HEK293 (cell line): ENCODE measurements at regions of chr5 and their contacts with region 1.

Region 1: GRCh38 chr5:171418316-171418981 is 998 bp upstream of the FGF18 start:
- H3K4me3 ChIP-seq: peak overlapping the region; percentile 49
- H3K27ac ChIP-seq: no peak overlapping the region
- H3K4me1 ChIP-seq: peaks cover 2% of the 10 kb centered on the region; the same call in 1 of the 2 replicates
- CTCF ChIP-seq: peak; percentile 96

Region 2: DNA sequence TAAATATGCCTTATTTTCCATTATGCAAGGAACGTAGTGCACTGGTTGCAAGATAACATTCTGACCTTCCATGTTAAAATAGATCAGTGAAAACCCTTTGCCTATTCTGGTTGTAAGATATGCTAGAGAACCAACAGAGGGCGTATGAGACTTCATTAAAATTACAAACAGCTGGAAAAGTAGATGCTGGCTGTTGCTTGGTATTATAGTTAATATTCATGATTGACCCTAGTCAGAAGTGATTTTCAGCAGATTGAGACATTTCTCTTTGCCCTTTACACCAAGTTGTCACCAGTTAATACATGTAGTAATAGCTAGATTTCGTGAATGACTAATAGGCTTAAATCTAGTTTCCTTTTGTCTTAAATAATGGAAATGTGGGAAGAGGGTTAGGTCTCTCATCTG is 12.8 kb before region 1 on chr5:
- CTCF ChIA-PET with region 1: interaction called, 10 read pairs
- POLR2A ChIA-PET with region 1: no interaction called
- H3K4me3 ChIP-seq: no peak overlapping the region
- H3K27ac ChIP-seq: no peak overlapping the region
- H3K4me1 ChIP-seq: no peaks in the 10 kb centered on the region
- CTCF ChIP-seq: no peak

Region 3: DNA sequence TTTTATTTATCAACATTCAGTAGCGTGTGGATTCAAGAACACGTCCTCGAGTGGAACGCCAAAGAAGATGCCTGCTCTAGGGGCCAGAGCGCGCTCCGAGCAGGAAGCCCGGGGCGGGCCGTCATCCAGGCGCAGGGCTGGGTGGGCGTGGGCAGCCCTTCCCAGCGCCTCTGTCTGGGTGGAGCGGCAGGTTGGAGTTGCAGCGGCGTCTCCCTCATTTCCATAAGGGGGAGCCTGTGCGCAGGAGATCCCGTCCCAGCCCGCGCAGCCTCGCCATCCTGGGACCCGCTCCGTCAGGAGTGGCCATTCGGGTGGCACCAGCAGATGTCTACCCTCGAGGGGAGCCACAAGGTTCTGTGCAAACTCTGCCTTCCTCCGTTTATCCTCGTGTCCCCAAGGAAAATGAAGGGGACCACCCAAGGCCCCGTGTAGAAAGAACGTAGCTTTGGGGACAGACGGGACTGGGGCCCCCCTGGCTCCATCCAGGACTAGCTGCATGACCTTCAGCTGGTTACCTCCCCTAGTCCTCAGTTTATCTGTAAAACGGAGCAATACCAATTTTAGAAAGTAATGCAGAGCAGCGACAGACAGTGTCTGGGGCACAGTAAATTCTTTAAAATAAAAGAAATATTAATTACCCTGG is 211.7 kb after region 1 on chr5:
- CTCF ChIA-PET with region 1: interaction called, 11 read pairs
- POLR2A ChIA-PET with region 1: no interaction called
- H3K4me3 ChIP-seq: no peak overlapping the region
- H3K27ac ChIP-seq: no peak overlapping the region
- H3K4me1 ChIP-seq: no peaks in the 10 kb centered on the region
- CTCF ChIP-seq: peak; percentile 80

Region 4: GRCh38 chr5:171724468-171725204 is 306.2 kb after region 1 on chr5:
- CTCF ChIA-PET with region 1: no interaction called
- POLR2A ChIA-PET with region 1: no interaction called
- H3K4me3 ChIP-seq: no peak overlapping the region
- H3K27ac ChIP-seq: no peak overlapping the region
- H3K4me1 ChIP-seq: no peaks in the 10 kb centered on the region
- CTCF ChIP-seq: no peak

Region 5: DNA sequence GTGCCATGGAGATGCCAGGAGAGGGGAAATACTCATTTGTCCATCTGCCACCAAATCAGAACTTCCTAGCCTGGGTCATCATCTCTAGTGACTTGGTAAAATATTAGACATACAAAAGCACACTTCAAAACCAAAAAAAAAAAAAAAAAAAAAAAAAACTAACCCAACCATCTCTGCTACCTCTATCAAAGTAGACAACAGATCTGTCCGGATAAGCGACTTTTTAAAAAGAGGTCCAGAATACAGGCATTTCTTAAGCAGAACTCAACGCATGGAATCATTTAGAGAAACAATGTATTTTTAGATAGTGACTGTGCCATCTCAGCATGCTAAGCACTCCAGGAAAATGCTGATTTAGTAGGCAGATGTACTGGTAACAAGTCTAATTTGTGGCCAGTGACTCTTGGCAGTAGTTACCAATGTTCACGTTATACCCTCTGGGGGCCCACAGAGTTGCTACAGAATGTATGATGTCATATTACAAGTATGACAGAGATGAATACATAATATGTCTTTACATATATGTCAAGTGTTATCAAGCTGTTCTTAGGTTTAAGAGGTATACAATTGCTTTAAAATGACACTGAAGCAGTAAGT is 474.9 kb after region 1 on chr5:
- CTCF ChIA-PET with region 1: interaction called, 11 read pairs
- POLR2A ChIA-PET with region 1: no interaction called
- H3K4me3 ChIP-seq: no peak overlapping the region
- H3K27ac ChIP-seq: no peak overlapping the region
- H3K4me1 ChIP-seq: no peaks in the 10 kb centered on the region
- CTCF ChIP-seq: no peak

Region 6: DNA sequence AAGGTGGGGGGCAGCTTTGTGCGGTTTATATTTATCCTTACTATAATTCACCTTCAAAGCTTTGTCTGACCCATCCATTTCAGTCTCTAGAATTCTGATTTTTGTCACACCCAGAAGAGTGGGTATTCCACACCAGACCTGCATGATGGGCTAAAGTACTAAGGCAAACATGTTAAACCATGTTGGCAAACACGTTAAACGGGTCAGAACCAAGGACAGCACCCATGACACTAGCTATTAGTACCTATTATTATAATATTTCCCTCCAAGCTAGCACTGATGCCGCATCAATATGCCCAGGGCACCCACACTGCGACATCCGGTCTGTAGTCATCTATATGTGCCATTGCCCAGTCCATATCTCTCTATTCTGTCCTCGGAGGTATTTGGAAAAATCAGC is 483.3 kb after region 1 on chr5:
- CTCF ChIA-PET with region 1: interaction called, 37 read pairs
- POLR2A ChIA-PET with region 1: no interaction called
- H3K4me3 ChIP-seq: no peak overlapping the region
- H3K27ac ChIP-seq: no peak overlapping the region
- H3K4me1 ChIP-seq: no peaks in the 10 kb centered on the region
- CTCF ChIP-seq: no peak

Region 7: DNA sequence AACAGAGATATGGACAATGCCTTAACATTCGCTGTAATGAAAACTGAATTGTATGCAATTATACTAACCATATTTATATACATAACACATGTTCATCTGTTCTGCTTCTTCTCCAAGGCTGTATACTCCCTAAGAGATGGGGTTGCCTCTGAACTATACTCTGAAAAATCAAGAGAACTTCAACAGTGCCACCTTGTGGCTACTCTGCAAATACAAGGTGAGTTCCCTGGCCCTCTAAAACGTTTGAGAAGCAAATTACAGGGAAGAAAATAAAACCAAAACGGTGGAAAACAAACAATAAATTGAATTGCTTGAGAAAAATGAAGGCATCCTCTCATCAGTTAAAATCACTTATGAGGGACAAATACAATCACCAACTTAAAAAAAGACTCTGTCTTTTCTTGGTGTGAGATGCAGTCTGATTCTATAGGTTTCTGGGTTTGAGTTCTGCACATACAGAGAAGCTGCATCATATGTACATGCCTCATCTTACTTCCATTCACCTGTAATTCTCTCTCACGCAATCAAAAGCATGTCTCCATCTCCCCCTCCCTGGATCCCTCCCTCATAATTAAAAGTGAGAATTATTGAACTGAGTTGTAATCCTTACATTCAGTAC is 489.4 kb after region 1 on chr5:
- CTCF ChIA-PET with region 1: interaction called, 37 read pairs
- POLR2A ChIA-PET with region 1: interaction called, 3 read pairs
- H3K4me3 ChIP-seq: no peak overlapping the region
- H3K27ac ChIP-seq: no peak overlapping the region
- H3K4me1 ChIP-seq: no peaks in the 10 kb centered on the region
- CTCF ChIP-seq: peak; percentile 38; the same call in 1 of the 2 replicates